ENCODE measurements at regions of chr3 and their contacts with region 1.

Region 1: DNA sequence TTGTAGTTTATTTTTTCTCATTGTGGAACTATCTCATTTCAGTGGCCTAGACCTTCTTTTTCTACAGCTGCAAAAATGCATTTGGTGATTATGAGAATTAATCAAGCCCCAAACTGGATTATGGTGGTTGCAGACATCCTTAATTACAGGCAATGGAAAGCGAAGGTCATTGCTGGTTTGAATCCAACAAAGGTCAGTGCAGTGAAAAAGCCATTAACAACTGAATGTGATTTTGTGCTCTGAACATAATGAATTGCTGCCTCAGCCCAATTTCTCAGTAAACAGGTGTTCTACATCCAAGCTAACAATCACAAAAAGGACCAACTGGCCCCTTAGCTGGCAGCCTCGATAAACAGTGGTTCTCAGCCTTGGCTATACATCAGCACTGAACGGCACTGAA is 260.1 kb upstream of the DPPA4 start:
- DNase-seq: no peak
- CTCF ChIP-seq: no peak

Region 2: GRCh38 chr3:109607897-109608296 is 10.5 kb after region 1 on chr3:
- CTCF ChIA-PET with region 1: interaction called, 11 read pairs
- POLR2A ChIA-PET with region 1: no interaction called
- DNase-seq: no peak
- CTCF ChIP-seq: no peak

Region 3: DNA sequence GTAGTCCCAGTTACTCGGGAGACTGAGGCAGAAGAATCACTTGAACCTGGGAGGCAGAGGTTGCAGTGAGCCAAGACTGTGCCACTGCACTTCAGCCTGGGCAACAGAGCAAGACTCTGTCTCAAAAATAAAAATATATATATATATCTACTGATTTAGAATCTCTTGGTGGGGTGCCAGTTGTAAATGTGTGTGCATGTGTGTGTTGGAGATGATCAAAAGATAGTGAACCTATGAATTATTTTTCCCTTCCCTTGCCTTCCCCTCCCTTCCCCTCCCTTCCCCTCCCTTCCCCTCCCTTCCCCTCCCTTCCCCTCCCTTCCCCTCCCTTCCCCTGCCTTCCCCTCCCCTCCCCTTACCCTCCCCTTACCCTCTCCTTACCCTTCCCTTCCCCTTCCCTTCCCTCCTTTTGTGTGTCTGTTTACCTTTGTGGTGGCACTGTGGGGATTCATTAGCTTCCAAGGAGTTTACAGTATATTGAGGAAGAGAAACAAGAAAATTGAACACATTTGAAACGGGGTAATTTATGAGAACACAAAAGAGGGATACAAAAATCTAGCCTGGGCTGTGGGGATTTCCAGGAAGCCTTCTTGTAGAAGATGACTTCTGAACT is 21.4 kb after region 1 on chr3:
- CTCF ChIA-PET with region 1: no interaction called
- POLR2A ChIA-PET with region 1: no interaction called
- DNase-seq: no peak
- CTCF ChIP-seq: no peak

Measured in GM10248 (cell line).